ENCODE measurements at regions of chr10 and their contacts with region 1.

Region 1: GRCh38 chr10:124741281-124741921 is 2.8 kb downstream of the FAM53B start:
- DNase-seq: peak; percentile 90
- ATAC-seq: peak; percentile 58 to 66

Region 2: DNA sequence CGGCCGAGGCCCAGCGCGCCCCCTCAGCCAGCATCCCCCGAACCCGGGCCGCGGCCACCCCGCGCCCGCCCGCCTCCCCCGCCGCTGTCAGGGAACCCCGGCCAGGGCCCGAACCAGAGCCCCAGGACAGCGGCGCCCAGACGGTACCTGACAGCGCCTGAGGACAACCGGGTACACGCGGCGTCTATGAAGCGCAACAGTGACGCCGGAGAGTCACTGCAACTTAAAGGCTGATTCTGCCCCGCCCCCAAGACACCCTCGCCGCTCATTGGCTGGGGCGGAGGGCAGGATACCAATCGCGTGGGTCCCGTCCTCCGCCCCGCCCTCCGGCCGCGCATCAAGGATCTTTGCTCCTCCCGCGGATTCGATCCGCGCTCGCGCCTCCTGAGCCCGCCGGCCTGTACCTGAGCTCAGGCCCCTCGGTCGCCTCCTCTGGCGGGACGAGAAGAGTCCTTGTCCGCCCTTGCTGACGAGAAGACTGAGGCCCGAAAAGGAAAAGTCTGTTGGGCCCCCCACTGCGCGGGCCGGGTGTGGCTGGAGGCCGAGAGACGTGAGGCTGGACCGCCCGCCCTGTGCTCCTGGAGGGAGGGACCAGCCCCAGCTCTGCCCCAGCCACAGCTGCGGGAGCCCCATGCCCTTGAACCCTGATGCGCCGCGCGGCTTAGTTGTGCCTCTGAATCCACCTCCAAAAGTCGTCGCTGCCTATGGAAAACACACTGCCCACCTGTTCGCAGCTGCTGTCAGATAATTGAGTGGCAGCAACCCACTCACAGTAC is 322.5 kb before region 1 on chr10 and contains the start of gene OAT:
- intact Hi-C with region 1: loop called in 1 of 2 experiments (anchors 10 kb)
- DNase-seq: peak; percentile 99
- ATAC-seq: peak; percentile 98
- total RNA-seq, gene OAT: 37.2 to 51.1 TPM

Region 3: DNA sequence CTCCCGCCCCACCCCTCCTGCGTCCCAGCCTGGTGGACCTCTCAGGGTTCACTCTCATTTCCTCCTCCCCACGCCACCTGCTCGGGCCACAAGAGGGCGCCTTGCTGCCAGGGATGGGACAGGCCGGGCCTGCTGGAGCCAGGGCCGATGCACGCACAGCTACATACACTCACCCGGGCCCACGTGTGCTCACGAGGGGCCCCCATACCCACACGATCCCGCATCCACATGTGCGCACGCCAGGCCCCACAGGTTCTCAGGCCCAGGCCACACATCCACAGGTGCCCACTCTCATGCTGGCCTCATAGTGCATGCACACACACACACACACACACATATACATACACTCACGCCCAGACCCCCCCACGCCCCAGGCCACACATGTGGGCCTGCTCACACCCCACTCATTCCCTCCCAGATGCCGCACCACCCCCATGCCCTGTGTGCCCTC is 211.2 kb before region 1 on chr10:
- intact Hi-C with region 1: loop called in 1 of 2 experiments (anchors 2 kb)
- DNase-seq: peak; percentile 89
- ATAC-seq: peak; percentile 86 to 90

Region 4: DNA sequence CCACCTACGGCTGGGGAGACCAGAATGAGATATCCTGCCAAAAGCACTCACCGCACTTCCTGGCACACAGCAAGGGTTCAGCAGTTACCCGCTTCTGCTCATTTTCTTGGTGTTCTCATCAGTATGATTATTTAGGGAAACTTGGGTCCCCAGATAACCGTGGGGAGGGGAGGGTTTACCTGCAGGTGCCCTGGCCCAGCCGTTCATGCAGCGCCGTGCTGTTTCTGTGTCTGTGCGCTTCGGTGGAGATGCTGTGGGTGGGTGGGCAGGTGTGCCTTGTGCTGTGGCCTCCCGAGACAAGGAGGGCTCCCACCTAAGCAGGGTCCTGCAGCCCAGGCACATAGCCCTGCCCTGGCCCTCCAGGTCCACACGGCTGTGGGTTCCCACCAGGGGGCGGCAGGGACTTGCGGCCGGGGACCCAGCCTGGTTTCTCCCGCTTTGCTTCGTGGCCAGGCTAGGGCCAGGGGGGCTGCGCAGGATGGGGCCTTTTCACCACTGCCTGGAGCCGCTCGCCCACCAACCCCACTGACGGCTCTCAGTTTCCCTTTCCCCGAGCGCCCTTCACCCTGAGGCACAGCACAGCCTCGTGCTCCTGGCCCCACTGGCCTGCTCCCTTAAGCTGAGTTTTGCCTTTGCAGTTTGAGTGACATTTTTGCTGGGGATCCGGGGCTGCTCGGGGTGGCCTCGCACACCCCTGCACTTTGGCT is 201.3 kb before region 1 on chr10:
- intact Hi-C with region 1: loop called (anchors 2 to 5 kb)
- DNase-seq: peak; percentile 79
- ATAC-seq: peak; percentile 81 to 86

Region 5: GRCh38 chr10:124619802-124620490 is 121.5 kb before region 1 on chr10:
- intact Hi-C with region 1: loop called in 1 of 2 experiments (anchors 5 kb)
- DNase-seq: no peak
- ATAC-seq: no peak

Region 6: GRCh38 chr10:124632064-124632531 is 109.3 kb before region 1 on chr10:
- intact Hi-C with region 1: loop called in 1 of 2 experiments (anchors 2 kb)
- DNase-seq: peak; percentile 77
- ATAC-seq: peak; percentile 61 to 68

Region 7: DNA sequence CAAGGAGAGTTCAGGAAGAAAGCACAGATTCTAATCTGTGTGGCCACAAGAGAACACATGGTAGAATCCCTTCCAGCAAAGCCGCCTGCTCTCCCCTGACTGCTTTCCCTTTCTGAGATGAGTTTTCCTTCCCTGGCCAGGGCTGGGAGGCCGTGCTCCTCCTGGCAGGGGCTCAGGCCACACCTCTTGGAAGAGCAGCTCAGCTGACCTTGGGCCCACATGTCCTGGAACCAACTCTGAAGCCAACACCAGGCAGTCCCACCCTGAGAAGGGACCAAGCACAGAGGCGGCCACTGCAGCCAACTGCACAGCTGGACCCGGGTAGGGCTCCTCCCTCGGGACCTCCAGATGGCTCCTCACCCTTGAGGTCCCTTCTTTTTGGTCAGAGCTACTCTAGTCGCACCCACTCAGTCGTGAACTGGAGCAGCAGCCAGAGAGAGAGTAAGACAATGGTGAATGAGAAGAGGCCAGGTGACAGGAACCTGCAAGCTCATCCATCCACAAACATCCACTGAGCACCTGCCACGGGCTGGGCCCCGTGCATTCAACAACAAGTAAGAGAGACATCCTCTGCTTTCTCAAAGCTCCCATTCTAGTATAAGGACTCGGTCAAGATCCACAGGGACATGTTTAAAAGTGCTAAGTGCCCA is 37.5 kb before region 1 on chr10:
- intact Hi-C with region 1: loop called in 1 of 2 experiments (anchors 2 kb)
- DNase-seq: peak; percentile 84
- ATAC-seq: peak; percentile 70

Region 8: GRCh38 chr10:124860426-124860825 is 119.0 kb after region 1 on chr10:
- intact Hi-C with region 1: no loop called
- DNase-seq: no peak
- ATAC-seq: no peak

Measured in left cardiac atrium (tissue), 4 donors.